A549 (cell line): ENCODE measurements at regions of chr1 and their contacts with region 1.

Region 1: GRCh38 chr1:115706587-115707425 is 61.7 kb downstream of the CASQ2 start:
- DNase-seq: peak in 1 of 2 experiments; percentile 31
- ATAC-seq: peak; percentile 59 to 78; a peak in 5 of 6 replicates
- H3K4me3 ChIP-seq: no peak overlapping the region
- H3K27ac ChIP-seq: no peak overlapping the region
- H3K4me1 ChIP-seq: no peaks in the 10 kb centered on the region
- CTCF ChIP-seq: peak; percentile 49
- EP300 ChIP-seq: no peak
- POLR2A ChIP-seq: no peak
- RAD21 ChIP-seq: peak; percentile 39 to 41; a peak in 3 of 5 replicates

Region 2: GRCh38 chr1:115694805-115695204 is 12.0 kb before region 1 on chr1:
- CTCF ChIA-PET with region 1: interaction called, 13 read pairs
- POLR2A ChIA-PET with region 1: no interaction called
- DNase-seq: no peak
- ATAC-seq: no peak
- H3K4me3 ChIP-seq: no peak overlapping the region
- H3K27ac ChIP-seq: no peak overlapping the region
- H3K4me1 ChIP-seq: no peaks in the 10 kb centered on the region
- CTCF ChIP-seq: no peak
- EP300 ChIP-seq: no peak
- POLR2A ChIP-seq: no peak
- RAD21 ChIP-seq: no peak

Region 3: GRCh38 chr1:115717541-115717940 is 10.7 kb after region 1 on chr1:
- CTCF ChIA-PET with region 1: interaction called, 12 read pairs
- POLR2A ChIA-PET with region 1: no interaction called
- DNase-seq: peak in 1 of 2 experiments; percentile 21
- ATAC-seq: peak in 1 of 2 experiments; percentile 51; a peak in 2 of 6 replicates
- H3K4me3 ChIP-seq: no peak overlapping the region
- H3K27ac ChIP-seq: no peak overlapping the region
- H3K4me1 ChIP-seq: no peaks in the 10 kb centered on the region
- CTCF ChIP-seq: no peak
- EP300 ChIP-seq: no peak
- POLR2A ChIP-seq: no peak
- RAD21 ChIP-seq: peak; percentile 37 to 47; a peak in 4 of 5 replicates

Region 4: GRCh38 chr1:115949156-115949555 is 242.3 kb after region 1 on chr1:
- CTCF ChIA-PET with region 1: no interaction called
- POLR2A ChIA-PET with region 1: no interaction called
- DNase-seq: no peak
- ATAC-seq: no peak
- H3K4me3 ChIP-seq: no peak overlapping the region
- H3K27ac ChIP-seq: no peak overlapping the region
- H3K4me1 ChIP-seq: no peaks in the 10 kb centered on the region
- CTCF ChIP-seq: no peak
- EP300 ChIP-seq: no peak
- POLR2A ChIP-seq: no peak
- RAD21 ChIP-seq: no peak

Region 5: GRCh38 chr1:116268204-116268603 is 561.4 kb after region 1 on chr1:
- CTCF ChIA-PET with region 1: no interaction called
- POLR2A ChIA-PET with region 1: no interaction called
- DNase-seq: peak; percentile 4 to 53
- ATAC-seq: no peak
- H3K4me3 ChIP-seq: no peak overlapping the region
- H3K27ac ChIP-seq: peak overlapping the region in 1 of 2 experiments; percentile 58; a peak in 2 of 6 replicates
- H3K4me1 ChIP-seq: peaks cover 5% of the 10 kb centered on the region; the same call in 2 of the 3 replicates
- CTCF ChIP-seq: no peak
- EP300 ChIP-seq: no peak
- POLR2A ChIP-seq: no peak
- RAD21 ChIP-seq: no peak